Mammary epithelial cell (primary cell): ENCODE measurements at regions of chr1 and their contacts with region 1.

Region 1: GRCh38 chr1:4652631-4653327 is 1.6 kb upstream of the AJAP1 start:
- DNase-seq: peak; percentile 4
- H3K4me3 ChIP-seq: no peak overlapping the region
- H3K27ac ChIP-seq: no peak overlapping the region
- H3K4me1 ChIP-seq: peaks cover 40% of the 10 kb centered on the region
- H3K27me3 ChIP-seq: no peaks in the 10 kb centered on the region
- CTCF ChIP-seq: peak; percentile 74 to 90

Region 2: DNA sequence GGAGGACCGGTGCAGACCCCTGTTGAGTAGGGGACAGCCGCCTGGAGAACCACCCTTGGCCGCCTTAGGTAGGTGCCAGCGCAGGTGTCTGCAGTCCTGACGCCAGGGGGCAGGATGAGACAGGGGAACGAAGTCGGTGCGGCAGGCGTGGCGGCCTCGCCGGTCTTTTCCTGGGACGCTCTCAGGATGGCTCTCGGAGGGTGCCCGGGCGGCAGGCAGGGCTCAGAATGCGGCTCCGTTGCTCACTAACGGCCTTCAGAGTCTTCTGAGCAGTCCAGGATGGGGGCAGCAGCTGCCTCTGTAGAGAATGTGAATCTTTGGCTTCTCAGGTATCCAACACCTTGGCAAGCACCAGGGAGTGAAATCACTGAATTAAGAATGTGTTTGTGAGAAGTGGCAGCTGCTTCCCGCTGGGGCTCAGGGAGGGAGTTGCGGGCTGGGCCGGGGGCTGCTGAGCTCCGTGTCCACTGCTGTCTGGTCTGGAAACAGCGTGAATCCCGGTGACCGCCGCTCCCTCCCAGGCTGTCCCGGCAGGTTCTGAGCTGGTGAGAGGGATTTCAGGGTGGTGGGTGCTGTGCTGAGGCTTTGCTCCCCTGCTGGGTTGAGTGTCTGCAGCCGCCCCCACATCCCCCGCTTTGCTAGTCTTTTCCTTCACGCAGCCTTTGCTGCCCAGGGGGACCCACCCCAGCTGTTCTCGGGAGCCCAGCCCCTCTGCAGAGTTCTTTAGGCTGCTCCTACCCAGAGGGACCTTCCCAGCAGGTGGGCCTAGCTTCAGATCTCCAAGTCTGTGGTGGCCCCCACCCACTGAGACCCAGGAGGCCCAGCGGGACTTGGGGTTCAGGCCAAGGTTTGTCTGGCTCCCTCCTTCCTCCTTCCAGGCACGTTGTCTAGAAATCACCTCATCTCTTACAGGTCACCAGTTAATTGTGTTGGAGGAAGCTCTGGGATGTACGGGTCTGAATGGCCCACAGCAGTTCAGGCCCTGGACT is 741.6 kb before region 1 on chr1:
- CTCF ChIA-PET with region 1: no interaction called
- dilution Hi-C with region 1: no loop called
- in situ Hi-C with region 1: loop called in 1 of 2 experiments (anchors 10 kb)
- intact Hi-C with region 1: loop called (anchors 2 kb)
- DNase-seq: peak; percentile 52
- H3K4me3 ChIP-seq: peak overlapping the region in 1 of 3 experiments; percentile 19
- H3K27ac ChIP-seq: no peak overlapping the region
- H3K4me1 ChIP-seq: peaks cover 4% of the 10 kb centered on the region
- H3K27me3 ChIP-seq: no peaks in the 10 kb centered on the region
- CTCF ChIP-seq: peak; percentile 80 to 89

Region 3: DNA sequence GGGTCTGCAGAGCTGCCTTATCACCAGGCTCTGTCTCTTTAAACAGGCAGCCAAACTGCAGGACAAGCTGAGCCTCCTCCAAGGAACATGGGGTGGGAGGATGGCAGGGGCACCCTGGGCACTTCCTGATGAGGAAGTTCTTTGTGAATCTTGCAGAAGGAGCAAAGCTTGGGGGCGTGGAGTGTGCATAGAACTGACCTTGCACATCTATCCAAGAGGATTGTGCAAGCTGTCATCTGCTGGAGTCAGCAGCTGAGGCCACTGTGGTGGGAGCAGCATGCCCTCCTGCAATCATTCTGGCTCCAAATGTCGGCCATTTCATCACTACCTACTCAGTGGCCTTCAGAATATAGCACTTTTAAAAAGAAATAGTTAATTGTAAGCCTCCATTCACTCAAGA is 183.8 kb after region 1 on chr1:
- CTCF ChIA-PET with region 1: interaction called, 4 read pairs
- dilution Hi-C with region 1: no loop called
- in situ Hi-C with region 1: no loop called
- intact Hi-C with region 1: loop called (anchors 5 kb)
- DNase-seq: no peak
- H3K4me3 ChIP-seq: no peak overlapping the region
- H3K27ac ChIP-seq: no peak overlapping the region
- H3K4me1 ChIP-seq: peaks cover 29% of the 10 kb centered on the region
- H3K27me3 ChIP-seq: no peaks in the 10 kb centered on the region
- CTCF ChIP-seq: no peak

Region 4: DNA sequence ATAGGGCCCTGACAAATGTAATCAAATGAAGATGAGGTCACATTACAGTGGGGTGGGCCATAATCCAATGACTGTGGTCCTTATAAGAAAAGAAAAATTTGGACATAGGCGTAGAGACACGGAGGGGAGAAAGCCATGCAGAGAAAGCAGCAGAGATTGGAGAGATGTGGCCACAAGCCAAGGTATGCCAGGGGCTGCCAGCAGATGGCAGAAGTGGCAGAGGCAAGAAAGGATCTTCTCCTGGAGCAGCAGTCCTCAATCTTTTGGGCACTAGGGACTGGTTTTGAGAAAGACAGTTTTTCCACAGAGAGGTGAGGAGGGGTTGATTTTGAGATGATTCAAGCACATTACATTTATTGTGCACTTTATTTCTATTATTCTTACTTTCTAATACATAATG is 984.4 kb after region 1 on chr1:
- CTCF ChIA-PET with region 1: no interaction called
- dilution Hi-C with region 1: no loop called
- in situ Hi-C with region 1: no loop called
- intact Hi-C with region 1: loop called (anchors 1 kb)
- DNase-seq: no peak
- H3K4me3 ChIP-seq: no peak overlapping the region
- H3K27ac ChIP-seq: no peak overlapping the region
- H3K4me1 ChIP-seq: no peaks in the 10 kb centered on the region
- H3K27me3 ChIP-seq: no peaks in the 10 kb centered on the region
- CTCF ChIP-seq: peak; percentile 56 to 78

Region 5: DNA sequence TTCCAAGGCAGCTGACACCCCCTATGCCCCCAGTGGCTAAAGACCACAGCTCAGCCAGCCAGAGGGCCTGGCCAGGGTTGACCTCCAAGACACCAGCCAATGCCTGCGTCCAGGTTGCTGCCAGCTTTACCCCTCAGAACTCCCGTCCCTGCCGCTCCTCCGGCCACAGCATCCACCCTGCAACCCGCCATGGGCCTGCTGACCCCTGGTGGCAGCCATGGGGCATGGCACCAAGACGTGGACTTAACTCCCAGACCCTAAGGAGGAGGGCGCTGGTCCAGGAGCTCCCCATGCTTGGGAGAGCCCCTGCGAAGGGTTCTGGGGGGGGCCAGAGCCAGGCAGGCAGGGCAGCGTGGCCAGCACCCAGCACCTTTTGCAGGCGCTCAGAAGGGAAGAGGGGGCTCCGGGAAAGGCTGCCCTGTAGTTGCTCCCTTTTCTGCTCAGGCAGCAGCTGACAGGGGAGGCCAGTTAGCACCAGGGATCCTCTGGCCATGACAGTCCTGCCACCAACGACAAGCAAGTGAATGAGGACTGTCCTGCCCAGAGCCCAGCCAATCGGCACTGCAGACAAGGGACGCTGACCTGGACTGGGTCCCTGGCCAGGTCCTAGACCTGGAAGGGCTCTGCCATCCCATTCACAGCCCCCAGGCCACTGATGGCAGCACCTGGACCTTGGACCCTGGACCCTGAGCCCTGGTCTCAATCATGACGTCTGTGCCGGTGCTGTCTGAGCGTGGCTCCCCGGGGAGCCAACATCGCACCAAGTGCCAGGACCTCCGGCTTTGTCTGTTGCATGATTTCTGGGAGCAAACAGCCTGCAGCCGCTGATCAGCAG is 1093.2 kb after region 1 on chr1:
- CTCF ChIA-PET with region 1: interaction called, 4 read pairs
- dilution Hi-C with region 1: no loop called
- in situ Hi-C with region 1: loop called in 1 of 2 experiments (anchors 25 kb)
- intact Hi-C with region 1: loop called (anchors 1 kb)
- DNase-seq: peak; percentile 47
- H3K4me3 ChIP-seq: no peak overlapping the region
- H3K27ac ChIP-seq: no peak overlapping the region
- H3K4me1 ChIP-seq: peaks cover 3% of the 10 kb centered on the region
- H3K27me3 ChIP-seq: no peaks in the 10 kb centered on the region
- CTCF ChIP-seq: peak; percentile 88 to 99